ENCODE measurements at regions of chr17 and their contacts with region 1.

Region 1: DNA sequence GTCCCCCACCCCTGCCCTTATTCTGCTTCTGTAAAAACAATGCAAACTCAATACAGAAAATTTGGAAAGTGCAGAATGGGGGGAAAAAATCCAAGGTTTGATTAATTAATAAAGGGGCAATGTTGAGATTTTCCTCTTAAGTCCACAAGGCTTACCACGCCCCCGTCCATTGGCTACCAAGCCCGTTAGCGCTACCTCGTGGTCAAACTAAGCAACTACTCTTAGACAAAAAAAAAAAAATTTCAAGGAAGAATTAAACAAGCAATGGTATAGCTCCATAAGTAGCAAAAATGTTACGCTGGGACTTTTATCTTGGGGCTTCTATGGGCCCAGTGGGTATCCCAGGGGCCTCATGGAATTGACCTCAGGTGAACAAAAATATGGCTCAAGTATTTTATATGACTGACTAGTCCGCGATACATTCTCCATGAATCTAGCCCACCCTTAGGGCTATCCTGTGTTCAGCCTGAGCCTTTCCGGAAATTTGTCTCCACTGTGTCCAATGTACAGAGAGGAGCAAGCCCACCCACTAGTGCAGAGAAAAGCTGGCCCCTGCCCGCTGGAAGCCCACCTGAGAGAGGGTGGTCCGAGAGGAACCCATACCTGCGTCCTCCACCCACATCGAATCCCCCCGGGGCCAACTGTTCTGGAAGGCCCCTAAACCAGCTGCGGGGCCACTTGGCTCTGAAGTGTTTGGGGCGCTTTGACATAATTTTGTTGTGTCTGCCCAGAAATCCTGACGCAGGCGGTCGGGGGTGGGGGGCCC is 19.1 kb upstream of the TEX2 start:
- DNase-seq: no peak
- H3K4me3 ChIP-seq: no peak overlapping the region
- H3K27ac ChIP-seq: no peak overlapping the region
- H3K4me1 ChIP-seq: peaks cover 9 to 26% (median 12%) of the 10 kb centered on the region in 3 donors
- H3K27me3 ChIP-seq: no peaks in the 10 kb centered on the region
- CTCF ChIP-seq: peak; percentile 14 to 77 (median 72)
- POLR2A ChIP-seq: no peak

Region 2: GRCh38 chr17:64145757-64146417 is 136.3 kb before region 1 on chr17:
- intact Hi-C with region 1: loop called (anchors 5 kb)
- DNase-seq: peak; percentile 89
- H3K4me3 ChIP-seq: peak overlapping the region; percentile 79 to 92 (median 90)
- H3K27ac ChIP-seq: peak overlapping the region; percentile 96 to 99 (median 98)
- H3K4me1 ChIP-seq: peaks cover 6 to 36% (median 9%) of the 10 kb centered on the region in 3 donors
- H3K27me3 ChIP-seq: no peaks in the 10 kb centered on the region
- CTCF ChIP-seq: peak in 1 of 6 experiments; percentile 16
- POLR2A ChIP-seq: peak in 3 of 4 donors; percentile 89 to 99 (median 98)